AG04450 (cell line): ENCODE measurements at regions of chr2 and their contacts with region 1.

Region 1: DNA sequence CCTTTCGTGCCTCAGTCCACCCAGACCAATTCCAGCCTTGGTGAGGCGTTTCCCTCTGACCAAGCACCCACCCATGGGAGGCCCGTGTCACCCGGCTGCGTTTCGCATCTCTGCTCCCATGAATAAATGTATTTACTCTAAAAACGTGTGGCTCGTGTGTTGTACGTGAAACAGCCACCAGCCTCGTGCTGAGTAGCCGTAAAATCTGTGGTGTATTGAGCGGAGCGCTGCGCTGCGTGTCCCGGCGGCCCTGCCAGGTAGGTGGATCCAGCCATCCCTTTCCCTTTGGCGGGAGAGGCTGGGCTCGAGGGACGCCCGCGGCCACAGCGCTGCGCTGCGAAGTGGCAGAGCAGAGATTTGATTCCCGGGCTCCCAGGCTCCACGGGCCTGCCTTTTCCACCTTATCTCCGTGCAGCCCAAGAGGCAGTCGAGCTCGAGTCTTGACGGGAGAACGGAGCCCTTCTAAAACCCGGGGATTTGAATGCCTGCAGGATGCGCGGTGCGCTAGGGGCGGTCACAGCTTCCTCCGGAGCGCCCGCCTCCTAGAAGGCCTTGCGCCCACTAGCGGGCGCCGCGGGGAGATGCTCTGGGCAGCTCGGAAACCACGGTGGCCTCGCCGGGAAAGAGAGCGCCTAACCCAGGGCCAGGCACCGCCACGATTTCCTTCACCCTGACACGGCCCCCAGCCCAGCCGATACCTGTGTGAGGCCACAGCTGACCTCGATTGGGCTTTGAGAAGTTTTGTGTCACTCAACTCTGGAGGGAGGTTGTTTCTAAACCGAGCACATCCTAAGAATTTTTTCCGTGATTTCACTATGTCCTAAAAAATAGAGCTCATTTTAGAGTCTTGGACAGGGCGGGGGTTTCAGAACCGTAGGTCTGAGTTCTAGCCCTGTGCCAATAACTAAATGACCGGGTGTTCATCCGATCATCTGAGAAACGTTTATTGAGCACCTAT is 3.9 kb upstream of the PSMD1 start:
- DNase-seq: peak; percentile 50
- H3K4me3 ChIP-seq: peak overlapping the region; percentile 67
- H3K27ac ChIP-seq: no peak overlapping the region
- H3K27me3 ChIP-seq: peaks cover 19% of the 10 kb centered on the region
- CTCF ChIP-seq: peak; percentile 97

Region 2: GRCh38 chr2:230824406-230824978 is 228.3 kb before region 1 on chr2:
- CTCF ChIA-PET with region 1: interaction called, 51 read pairs
- POLR2A ChIA-PET with region 1: no interaction called
- DNase-seq: peak; percentile 70
- H3K4me3 ChIP-seq: peak overlapping the region; percentile 53
- H3K27ac ChIP-seq: no peak overlapping the region
- H3K27me3 ChIP-seq: peaks cover 19% of the 10 kb centered on the region
- CTCF ChIP-seq: peak; percentile 73

Region 3: DNA sequence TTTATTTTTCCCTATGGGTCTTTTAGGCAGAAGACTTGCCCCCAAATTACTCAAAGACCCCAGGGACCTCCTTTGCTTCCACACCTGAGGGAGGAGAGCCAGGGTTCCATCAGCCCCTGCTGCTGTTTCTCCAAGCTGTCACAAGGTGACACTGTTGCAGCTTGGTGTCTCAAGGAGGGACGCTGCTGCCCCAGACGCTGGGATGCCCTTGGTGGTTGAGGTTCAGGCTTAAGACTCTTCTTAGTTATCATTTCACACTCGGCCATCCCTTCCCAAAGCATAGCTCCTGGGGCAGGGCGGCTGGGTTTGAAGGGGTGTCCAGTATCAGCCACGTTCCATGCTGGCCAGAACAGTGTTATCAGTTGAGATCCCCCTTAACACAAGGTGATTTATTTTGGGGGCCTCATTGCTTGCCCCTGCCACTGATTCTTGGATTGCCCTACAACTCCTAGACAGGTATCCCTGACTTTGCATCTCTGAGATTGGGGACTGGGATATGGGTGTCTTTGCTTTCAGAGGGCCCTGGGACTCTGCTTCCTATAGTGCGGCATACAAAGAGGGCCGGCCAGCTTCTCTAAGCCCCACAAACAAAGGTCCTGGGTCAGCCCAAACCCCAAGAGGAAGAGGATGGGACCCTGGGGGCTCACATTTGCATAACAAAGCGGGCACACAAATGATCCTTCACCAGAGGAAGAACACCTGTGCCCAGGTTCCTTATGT is 150.4 kb before region 1 on chr2:
- CTCF ChIA-PET with region 1: interaction called, 22 read pairs
- POLR2A ChIA-PET with region 1: interaction called, 3 read pairs
- DNase-seq: peak; percentile 42
- H3K4me3 ChIP-seq: no peak overlapping the region
- H3K27ac ChIP-seq: no peak overlapping the region
- H3K27me3 ChIP-seq: peaks cover 30% of the 10 kb centered on the region
- CTCF ChIP-seq: peak; percentile 95

Region 4: GRCh38 chr2:231041061-231041689 is 11.6 kb before region 1 on chr2:
- CTCF ChIA-PET with region 1: interaction called, 22 read pairs
- POLR2A ChIA-PET with region 1: no interaction called
- DNase-seq: no peak
- H3K4me3 ChIP-seq: no peak overlapping the region
- H3K27ac ChIP-seq: no peak overlapping the region
- H3K27me3 ChIP-seq: peaks cover 42% of the 10 kb centered on the region
- CTCF ChIP-seq: no peak

Region 5: DNA sequence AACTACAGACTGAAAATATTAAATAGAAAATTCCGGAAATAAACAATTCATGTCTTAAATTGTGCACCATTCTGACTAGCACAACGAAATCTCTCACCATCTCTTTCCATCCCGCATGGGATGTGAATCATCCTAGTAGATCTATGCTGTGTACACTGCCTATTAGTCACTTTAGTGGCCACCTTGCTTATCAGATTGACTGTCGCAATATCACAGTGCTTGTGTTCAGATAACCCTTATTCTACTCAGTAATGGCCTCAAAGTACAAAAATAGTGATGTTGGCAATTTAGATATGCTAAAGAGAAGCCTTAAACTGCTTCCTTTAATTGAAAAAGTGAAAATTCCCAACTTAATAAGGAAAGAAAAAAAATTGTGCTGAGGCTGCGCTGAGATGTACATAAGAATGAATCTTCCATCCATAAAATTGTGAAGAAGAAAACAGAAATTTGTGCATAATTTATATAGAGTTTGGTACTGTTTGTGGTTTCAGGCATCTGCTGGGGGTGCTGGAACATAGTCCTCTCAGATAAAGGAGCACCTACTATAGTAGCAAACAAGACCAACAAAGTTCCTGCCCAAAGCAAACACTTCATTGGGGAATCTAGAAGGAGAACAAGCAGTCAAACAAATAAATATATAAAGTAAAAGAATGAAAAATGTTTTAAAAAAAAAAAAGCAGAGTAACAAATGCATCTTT is 15.9 kb after region 1 on chr2:
- CTCF ChIA-PET with region 1: interaction called, 16 read pairs
- POLR2A ChIA-PET with region 1: interaction called, 4 read pairs
- DNase-seq: no peak
- H3K4me3 ChIP-seq: no peak overlapping the region
- H3K27ac ChIP-seq: no peak overlapping the region
- H3K27me3 ChIP-seq: no peaks in the 10 kb centered on the region
- CTCF ChIP-seq: no peak

Region 6: GRCh38 chr2:231094736-231095346 is 42.1 kb after region 1 on chr2:
- CTCF ChIA-PET with region 1: no interaction called
- POLR2A ChIA-PET with region 1: no interaction called
- DNase-seq: no peak
- H3K4me3 ChIP-seq: no peak overlapping the region
- H3K27ac ChIP-seq: no peak overlapping the region
- H3K27me3 ChIP-seq: no peaks in the 10 kb centered on the region
- CTCF ChIP-seq: no peak